Aorta (tissue), 5 donors: ENCODE measurements at regions of chr11 and their contacts with region 1.

Region 1: DNA sequence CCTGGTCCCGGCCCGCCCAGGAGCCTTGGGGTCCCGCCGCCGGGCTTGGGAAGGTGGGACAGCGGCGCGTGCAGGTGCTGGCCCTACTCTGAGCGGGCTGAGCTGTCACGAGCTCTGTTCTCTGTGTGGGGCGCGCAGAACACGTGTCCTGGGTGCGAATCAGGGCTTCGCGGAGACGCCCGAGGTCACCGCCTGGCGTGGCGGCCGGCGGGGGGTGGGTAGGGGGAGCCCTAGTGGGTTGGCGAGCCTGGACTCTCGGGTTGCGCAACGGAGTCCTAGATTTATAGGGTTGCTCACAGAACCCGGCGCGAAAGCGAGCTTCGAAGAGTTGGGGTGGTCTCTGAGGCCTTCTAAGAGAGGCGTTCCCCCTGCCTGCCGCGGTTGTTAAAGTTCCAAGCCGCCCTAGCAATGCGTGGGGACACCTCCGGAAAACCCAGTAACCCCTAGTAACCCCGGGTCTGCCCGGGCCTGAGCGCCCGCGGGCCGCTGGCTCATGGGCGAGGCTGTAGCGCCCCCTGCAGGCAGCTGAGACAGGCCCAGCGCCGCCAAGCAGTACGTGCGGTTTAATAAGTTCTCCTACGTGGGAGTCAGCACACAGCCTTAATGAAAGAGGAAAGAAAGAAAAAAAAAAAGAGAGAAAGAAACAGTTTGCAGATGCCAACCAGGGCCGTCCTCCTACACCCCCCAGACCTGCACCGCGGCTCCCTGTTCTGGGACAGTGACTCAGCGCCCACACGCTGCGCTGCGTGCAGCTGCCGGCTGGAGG is 2.8 kb downstream of the ADM start:
- DNase-seq: peak; percentile 94 to 95
- ATAC-seq: peak; percentile 83
- H3K4me3 ChIP-seq: peak overlapping the region in 1 of 2 donors; percentile 37
- H3K27ac ChIP-seq: no peak overlapping the region
- H3K4me1 ChIP-seq: no peaks in the 10 kb centered on the region
- H3K27me3 ChIP-seq: no peaks in the 10 kb centered on the region

Region 2: DNA sequence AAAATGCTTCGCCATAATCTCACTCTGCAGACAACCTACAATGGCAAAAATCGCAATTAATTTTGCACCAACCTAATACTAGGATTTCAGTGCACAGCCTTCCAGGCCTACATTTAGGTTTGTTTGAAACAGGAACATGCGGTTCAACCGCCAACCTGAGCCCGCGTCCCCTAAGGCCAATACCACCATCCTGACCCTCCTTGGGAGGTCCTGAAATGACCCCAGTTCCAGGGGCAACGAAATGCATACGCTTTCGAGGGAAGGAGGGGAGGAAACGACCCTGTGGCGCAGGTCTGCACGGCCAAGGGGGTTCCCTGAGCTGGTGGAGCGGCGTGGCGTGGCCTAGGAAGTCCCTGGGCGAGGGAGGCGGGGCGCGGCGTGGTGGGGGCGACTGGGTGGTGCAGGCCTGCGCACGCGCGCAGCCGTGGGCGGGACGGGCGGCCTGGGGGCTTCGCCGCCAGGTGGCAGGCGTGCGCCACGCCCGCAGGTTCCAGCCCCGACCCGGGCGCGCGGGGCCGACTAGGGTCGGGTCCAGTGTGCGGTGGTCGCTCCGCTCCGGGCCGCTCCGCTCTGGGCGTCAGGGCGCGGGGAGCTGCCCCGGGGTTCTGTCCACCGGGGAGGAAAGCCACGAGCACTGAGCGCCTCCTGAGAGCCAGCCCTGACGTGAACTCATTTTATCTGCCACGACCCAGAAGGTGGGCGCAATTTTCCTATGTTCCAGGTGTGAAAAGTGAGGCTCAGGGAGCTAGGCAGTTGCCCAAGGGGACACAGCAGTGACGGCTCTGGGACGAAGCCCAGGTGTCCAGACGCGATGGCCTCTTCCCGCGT is 549.6 kb before region 1 on chr11:
- intact Hi-C with region 1: loop called (anchors 2 to 5 kb)
- DNase-seq: peak; percentile 94 to 96
- ATAC-seq: peak; percentile 85
- H3K4me3 ChIP-seq: peak overlapping the region; percentile 17 to 31
- H3K27ac ChIP-seq: peak overlapping the region; percentile 44 to 56
- H3K4me1 ChIP-seq: no peaks in the 10 kb centered on the region
- H3K27me3 ChIP-seq: no peaks in the 10 kb centered on the region

Region 3: GRCh38 chr11:9972989-9973388 is 334.6 kb before region 1 on chr11:
- intact Hi-C with region 1: loop called in 1 of 2 experiments (anchors 5 kb)
- DNase-seq: no peak
- ATAC-seq: no peak
- H3K4me3 ChIP-seq: no peak overlapping the region
- H3K27ac ChIP-seq: no peak overlapping the region
- H3K4me1 ChIP-seq: peaks cover 0 to 2% of the 10 kb centered on the region in 2 donors
- H3K27me3 ChIP-seq: no peaks in the 10 kb centered on the region

Region 4: GRCh38 chr11:10208131-10208575 is 99.5 kb before region 1 on chr11:
- intact Hi-C with region 1: loop called (anchors 5 kb)
- DNase-seq: no peak
- ATAC-seq: peak; percentile 65
- H3K4me3 ChIP-seq: no peak overlapping the region
- H3K27ac ChIP-seq: no peak overlapping the region
- H3K4me1 ChIP-seq: peaks cover 0 to 2% of the 10 kb centered on the region in 2 donors
- H3K27me3 ChIP-seq: no peaks in the 10 kb centered on the region

Region 5: DNA sequence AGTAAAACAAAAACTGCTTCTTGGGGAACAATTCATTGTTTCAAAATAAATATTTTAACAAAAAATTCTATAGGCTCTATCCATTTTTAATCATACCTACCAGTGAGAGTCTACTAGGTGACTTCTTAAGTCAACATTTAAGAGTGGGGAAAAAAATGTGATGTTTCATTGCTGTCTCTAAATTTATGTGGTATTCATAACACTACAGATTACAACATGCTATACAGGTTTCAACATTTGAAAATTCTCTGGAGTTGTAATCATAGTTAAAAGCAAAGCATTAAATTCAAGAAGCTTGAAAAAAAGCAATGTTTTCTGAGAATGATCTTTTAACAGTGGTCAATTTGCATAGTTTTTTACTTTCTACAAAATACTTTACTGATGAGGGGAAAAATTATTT is 31.9 kb before region 1 on chr11:
- intact Hi-C with region 1: no loop called
- DNase-seq: no peak
- ATAC-seq: no peak
- H3K4me3 ChIP-seq: no peak overlapping the region
- H3K27ac ChIP-seq: no peak overlapping the region
- H3K4me1 ChIP-seq: no peaks in the 10 kb centered on the region
- H3K27me3 ChIP-seq: no peaks in the 10 kb centered on the region

Region 6: GRCh38 chr11:10322830-10323792 is 15.5 kb after region 1 on chr11:
- intact Hi-C with region 1: loop called in 1 of 2 experiments (anchors 1 kb)
- DNase-seq: peak in 1 of 2 donors; percentile 72
- ATAC-seq: peak; percentile 82
- H3K4me3 ChIP-seq: no peak overlapping the region
- H3K27ac ChIP-seq: peak overlapping the region; percentile 86 to 96
- H3K4me1 ChIP-seq: peaks cover 6 to 7% of the 10 kb centered on the region in 2 donors
- H3K27me3 ChIP-seq: no peaks in the 10 kb centered on the region

Region 7: GRCh38 chr11:10379022-10379421 is 71.4 kb after region 1 on chr11:
- intact Hi-C with region 1: no loop called
- DNase-seq: no peak
- ATAC-seq: no peak
- H3K4me3 ChIP-seq: no peak overlapping the region
- H3K27ac ChIP-seq: no peak overlapping the region
- H3K4me1 ChIP-seq: no peaks in the 10 kb centered on the region
- H3K27me3 ChIP-seq: no peaks in the 10 kb centered on the region

Region 8: DNA sequence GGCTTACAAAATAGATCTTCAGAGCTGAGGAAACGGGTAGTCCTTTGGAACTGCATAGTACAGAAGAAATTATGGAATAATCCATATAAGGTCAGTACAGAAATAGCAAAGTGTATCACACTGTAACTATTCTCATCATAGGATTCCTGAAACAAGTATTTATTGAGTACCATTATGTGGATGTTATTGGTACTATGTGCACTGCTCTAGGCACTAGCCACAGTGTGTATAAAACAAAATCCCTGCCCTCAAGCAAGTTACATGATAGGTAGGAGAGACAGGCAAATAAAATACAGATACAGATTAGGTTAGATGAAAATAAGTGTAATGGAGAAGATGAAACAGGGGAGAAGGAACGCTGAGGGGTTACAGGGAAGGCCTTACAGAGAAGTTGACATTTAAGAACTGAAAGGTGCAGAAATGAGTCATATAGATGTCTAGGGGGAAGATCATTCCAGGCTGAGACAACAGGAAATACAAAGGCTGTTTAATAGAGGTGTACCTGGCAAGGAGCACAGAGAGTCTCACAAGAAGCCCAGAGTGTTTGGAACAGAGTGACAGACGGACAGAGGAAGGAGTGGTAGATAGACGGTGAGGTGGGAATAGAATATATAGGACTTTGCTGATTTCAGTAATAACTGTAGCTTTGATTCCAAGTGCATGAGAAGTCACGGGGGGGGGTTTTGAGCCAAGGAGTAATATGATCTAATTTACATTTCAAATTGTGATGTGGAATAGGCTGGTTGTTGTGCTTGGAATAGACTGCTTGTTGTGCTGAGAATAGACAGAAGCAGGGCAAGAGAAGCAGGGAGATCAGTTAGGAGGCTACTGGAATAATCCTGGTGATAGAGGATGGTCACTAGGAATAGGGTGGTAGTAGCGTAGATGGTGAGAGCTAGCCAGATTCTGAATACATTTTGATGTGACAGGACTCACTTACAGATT is 219.6 kb after region 1 on chr11:
- intact Hi-C with region 1: no loop called
- DNase-seq: no peak
- ATAC-seq: no peak
- H3K4me3 ChIP-seq: no peak overlapping the region
- H3K27ac ChIP-seq: peak overlapping the region; percentile 90 to 94
- H3K4me1 ChIP-seq: peaks cover 6 to 7% of the 10 kb centered on the region in 2 donors
- H3K27me3 ChIP-seq: no peaks in the 10 kb centered on the region